GM12878 (cell line): ENCODE measurements at regions of chr17 and their contacts with region 1.

Region 1: DNA sequence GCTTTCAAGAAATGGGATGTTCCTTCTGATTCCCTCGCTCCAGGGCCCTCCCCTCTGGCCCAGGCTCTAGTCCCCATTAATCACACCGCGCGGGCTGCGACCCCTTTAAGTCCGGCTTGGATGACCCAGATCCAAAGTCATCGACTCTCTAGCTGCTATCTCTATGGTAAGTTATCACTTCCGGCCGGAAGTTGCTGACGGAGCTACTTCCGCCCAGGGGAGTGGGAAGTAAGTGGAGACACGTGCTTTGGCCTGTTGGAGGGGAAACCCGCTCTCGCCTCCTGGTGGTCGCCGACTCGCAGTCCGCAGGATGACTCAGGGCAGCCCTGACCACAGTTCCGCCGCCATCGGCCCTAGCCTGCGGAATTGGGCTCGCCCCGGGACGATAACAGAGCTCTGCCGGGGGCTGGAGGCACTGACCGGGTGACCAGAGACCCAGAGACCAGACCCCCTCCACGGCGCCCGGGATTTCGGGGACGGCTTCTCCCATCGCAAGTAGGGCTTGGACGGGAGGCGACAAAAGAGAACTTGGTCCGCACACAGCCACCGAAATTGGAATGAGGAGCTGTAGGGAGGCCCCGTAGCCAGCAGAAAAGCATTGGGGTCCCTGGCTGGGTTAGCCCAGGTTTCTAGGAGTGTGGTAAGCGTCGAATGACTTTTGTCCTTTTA is 52.2 kb upstream of the SEC14L1 start:
- DNase-seq: peak; percentile 87
- ATAC-seq: peak; percentile 93
- H3K4me3 ChIP-seq: peak overlapping the region; percentile 91
- H3K27ac ChIP-seq: peak overlapping the region; percentile 91
- H3K4me1 ChIP-seq: peaks cover 23% of the 10 kb centered on the region
- H3K27me3 ChIP-seq: no peaks in the 10 kb centered on the region
- CTCF ChIP-seq: peak; percentile 61 to 77 (median 66)
- EP300 ChIP-seq: peak; percentile 31 to 39; a peak in 1 of 4 replicates
- POLR2A ChIP-seq: peak; percentile 93
- RAD21 ChIP-seq: 0 out of 2 replicates have a peak, but pooled peaks have one; percentile 22

Region 2: DNA sequence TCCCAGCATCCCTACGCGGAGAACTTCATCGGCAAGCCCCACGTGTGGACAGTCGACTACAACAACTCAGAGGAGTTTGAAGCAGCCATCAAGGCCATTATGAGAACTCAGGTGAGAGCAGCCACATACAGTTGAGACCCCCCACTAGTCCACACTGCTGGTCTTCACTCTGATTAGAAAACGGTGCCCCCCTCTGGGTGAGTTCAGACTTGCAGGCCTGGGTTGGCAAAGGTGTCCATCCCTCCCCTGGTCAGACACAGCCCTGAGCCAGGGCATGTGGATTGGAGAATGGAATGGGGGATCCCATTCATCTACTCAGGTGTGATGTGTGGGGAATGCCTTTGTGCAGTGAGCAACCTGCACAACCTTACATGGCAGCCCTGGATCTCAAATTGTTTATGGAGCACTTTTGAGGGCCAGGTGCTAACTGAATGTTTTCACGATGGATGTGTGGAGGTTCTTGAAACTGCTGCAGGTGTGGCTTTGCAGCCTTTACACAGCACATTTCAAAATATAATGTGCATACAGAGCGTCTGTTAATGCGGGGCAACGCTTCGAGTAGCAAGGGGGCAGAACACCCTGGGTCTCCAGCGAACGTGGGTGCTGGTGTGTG is 147.7 kb before region 1 on chr17:
- CTCF ChIA-PET with region 1: no interaction called
- POLR2A ChIA-PET with region 1: no interaction called
- RAD21 ChIA-PET with region 1: no interaction called
- SMC1A ChIA-PET with region 1: no interaction called
- in situ Hi-C with region 1: no loop called
- intact Hi-C with region 1: no loop called
- DNase-seq: no peak
- ATAC-seq: no peak
- H3K4me3 ChIP-seq: no peak overlapping the region
- H3K27ac ChIP-seq: no peak overlapping the region
- H3K4me1 ChIP-seq: no peaks in the 10 kb centered on the region
- H3K27me3 ChIP-seq: no peaks in the 10 kb centered on the region; a peak in 1 of 4 replicates
- CTCF ChIP-seq: peak in 1 of 3 experiments; percentile 15; a peak in 2 of 6 replicates
- EP300 ChIP-seq: no peak
- POLR2A ChIP-seq: no peak
- RAD21 ChIP-seq: no peak

Region 3: DNA sequence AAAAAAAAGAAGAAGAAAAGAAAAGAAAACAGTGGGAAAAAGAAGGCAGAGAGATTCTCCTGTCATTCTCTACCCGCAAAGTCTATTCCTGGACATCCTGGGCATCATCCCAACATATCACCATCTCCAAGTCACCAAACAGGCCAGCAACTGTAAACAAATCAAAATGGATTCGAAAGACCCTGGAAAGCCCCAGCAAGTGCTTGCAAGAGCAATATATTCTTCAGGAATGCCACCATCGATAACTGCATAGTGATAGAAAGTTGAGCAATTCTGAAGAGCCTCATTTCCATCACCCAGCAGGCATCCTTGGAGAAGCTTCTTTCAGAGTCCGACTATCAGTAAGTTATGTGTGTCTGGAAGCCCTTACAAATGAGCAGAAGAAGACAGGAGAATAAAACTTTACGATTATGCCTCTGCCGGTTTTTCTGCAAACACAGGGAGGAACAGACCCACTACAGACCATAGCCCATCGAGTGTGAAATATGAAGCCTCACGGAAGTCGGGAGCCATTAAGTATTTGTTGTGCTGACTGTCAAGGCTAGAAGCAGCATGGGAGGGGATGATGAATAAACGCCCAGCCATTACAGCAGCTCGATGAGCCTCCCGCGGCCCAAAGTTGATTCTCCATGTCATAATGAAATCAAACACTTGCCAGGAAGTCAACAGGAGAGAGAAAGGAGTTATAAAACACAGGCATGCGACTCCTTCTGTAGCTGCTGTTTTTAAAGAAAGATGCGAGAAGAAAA is 12.3 kb before region 1 on chr17:
- CTCF ChIA-PET with region 1: interaction called, 29 read pairs
- POLR2A ChIA-PET with region 1: interaction called, 5 read pairs
- RAD21 ChIA-PET with region 1: no interaction called
- SMC1A ChIA-PET with region 1: interaction called, 3 read pairs
- in situ Hi-C with region 1: no loop called
- intact Hi-C with region 1: no loop called
- DNase-seq: no peak
- ATAC-seq: no peak
- H3K4me3 ChIP-seq: no peak overlapping the region
- H3K27ac ChIP-seq: no peak overlapping the region
- H3K4me1 ChIP-seq: no peaks in the 10 kb centered on the region
- H3K27me3 ChIP-seq: no peaks in the 10 kb centered on the region; a peak in 1 of 4 replicates
- CTCF ChIP-seq: no peak
- EP300 ChIP-seq: no peak
- POLR2A ChIP-seq: no peak
- RAD21 ChIP-seq: no peak

Region 4: GRCh38 chr17:77120868-77121267 is 32.3 kb after region 1 on chr17:
- CTCF ChIA-PET with region 1: no interaction called
- POLR2A ChIA-PET with region 1: no interaction called
- RAD21 ChIA-PET with region 1: no interaction called
- SMC1A ChIA-PET with region 1: no interaction called
- in situ Hi-C with region 1: no loop called
- intact Hi-C with region 1: no loop called
- DNase-seq: no peak
- ATAC-seq: no peak
- H3K4me3 ChIP-seq: no peak overlapping the region
- H3K27ac ChIP-seq: no peak overlapping the region
- H3K4me1 ChIP-seq: peaks cover 3% of the 10 kb centered on the region; the same call in 1 of the 2 replicates
- H3K27me3 ChIP-seq: no peaks in the 10 kb centered on the region
- CTCF ChIP-seq: no peak
- EP300 ChIP-seq: no peak
- POLR2A ChIP-seq: no peak
- RAD21 ChIP-seq: no peak

Region 5: DNA sequence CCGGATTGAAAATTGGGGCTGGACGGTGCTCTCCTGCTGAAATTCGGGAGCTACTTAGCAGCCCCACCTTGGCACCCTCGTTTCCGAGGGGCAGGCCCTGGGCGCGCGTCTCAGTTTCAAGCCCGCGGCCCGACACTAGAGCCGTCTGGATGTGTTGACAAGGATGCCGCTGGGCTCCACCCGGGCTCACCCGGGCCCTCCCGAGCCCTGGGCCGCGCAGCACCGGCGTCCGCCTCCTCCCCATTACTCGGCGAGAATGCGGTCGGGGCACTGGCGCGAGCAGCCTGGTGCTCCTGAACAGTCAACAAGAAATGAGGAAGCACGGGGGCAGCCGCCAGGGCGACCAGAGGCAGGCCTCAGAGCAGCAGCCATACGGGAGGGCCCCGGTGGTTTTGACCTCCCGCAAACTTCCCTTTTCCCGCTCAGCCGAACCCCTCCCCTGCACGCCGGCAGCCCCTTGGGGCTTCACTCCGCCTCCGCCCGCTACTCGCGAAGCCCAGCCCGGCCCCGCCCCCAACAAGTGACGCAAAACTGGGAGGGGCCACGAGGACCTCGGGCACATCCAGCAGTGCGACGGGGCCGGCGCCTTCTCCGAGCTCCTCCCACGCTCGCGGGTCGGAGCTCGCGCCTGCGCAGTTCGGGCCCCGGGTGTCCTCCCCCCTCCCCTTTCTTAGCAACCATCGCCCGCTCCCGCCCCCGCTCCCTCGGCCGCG is 51.7 kb after region 1 on chr17:
- CTCF ChIA-PET with region 1: interaction called, 14 read pairs
- POLR2A ChIA-PET with region 1: interaction called, 14 read pairs
- RAD21 ChIA-PET with region 1: interaction called, 9 read pairs
- SMC1A ChIA-PET with region 1: interaction called, 12 read pairs
- in situ Hi-C with region 1: no loop called
- intact Hi-C with region 1: loop called (anchors 2 kb)
- DNase-seq: peak; percentile 93
- ATAC-seq: peak; percentile 83
- H3K4me3 ChIP-seq: peak overlapping the region; percentile 34
- H3K27ac ChIP-seq: peak overlapping the region; percentile 84
- H3K4me1 ChIP-seq: peaks cover 17% of the 10 kb centered on the region
- H3K27me3 ChIP-seq: no peaks in the 10 kb centered on the region
- CTCF ChIP-seq: no peak
- EP300 ChIP-seq: peak; percentile 58 to 70; a peak in 2 of 4 replicates
- POLR2A ChIP-seq: peak; percentile 88
- RAD21 ChIP-seq: peak; percentile 12; the same call in 1 of the 2 replicates

Region 6: GRCh38 chr17:77214743-77215142 is 126.2 kb after region 1 on chr17:
- CTCF ChIA-PET with region 1: interaction called, 14 read pairs
- POLR2A ChIA-PET with region 1: interaction called, 9 read pairs
- RAD21 ChIA-PET with region 1: interaction called, 10 read pairs
- SMC1A ChIA-PET with region 1: interaction called, 12 read pairs
- in situ Hi-C with region 1: no loop called
- intact Hi-C with region 1: no loop called
- DNase-seq: no peak
- ATAC-seq: no peak
- H3K4me3 ChIP-seq: no peak overlapping the region
- H3K27ac ChIP-seq: no peak overlapping the region
- H3K4me1 ChIP-seq: peaks cover 36% of the 10 kb centered on the region
- H3K27me3 ChIP-seq: no peaks in the 10 kb centered on the region
- CTCF ChIP-seq: peak in 2 of 3 experiments; percentile 39 to 49; a peak in 5 of 6 replicates
- EP300 ChIP-seq: no peak
- POLR2A ChIP-seq: no peak
- RAD21 ChIP-seq: peak; percentile 17

Region 7: DNA sequence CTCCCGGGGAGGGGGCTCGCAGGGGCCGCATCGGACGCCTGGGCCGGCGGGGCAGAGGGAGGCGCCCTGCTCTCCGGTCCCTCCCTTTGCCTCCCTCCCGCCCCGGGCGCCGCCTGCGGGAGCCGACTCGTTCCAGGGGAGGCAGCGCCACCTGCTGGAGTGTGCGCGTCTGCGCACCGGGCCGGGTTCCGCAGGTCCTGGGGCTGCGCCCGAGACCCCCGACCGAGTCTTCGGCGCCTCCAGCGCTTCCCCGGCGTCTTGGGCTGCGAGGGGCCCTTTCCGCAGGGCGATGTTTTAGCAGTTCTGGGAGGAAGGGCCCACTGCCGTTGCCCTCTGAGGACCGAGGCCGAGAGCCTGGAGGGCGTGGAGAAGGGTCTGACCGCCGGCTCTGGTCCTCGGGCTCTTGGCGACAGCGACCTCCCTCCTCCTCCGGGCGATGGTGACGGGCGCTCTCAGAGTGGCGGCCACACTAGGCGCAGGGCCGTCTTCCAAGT is 158.5 kb after region 1 on chr17:
- CTCF ChIA-PET with region 1: interaction called, 33 read pairs
- POLR2A ChIA-PET with region 1: no interaction called
- RAD21 ChIA-PET with region 1: interaction called, 6 read pairs
- SMC1A ChIA-PET with region 1: interaction called, 14 read pairs
- in situ Hi-C with region 1: loop called (anchors 5 kb)
- intact Hi-C with region 1: loop called (anchors 1 kb)
- DNase-seq: no peak
- ATAC-seq: peak; percentile 88
- H3K4me3 ChIP-seq: peak overlapping the region; percentile 73
- H3K27ac ChIP-seq: peak overlapping the region; percentile 44
- H3K4me1 ChIP-seq: peaks cover 27% of the 10 kb centered on the region
- H3K27me3 ChIP-seq: no peaks in the 10 kb centered on the region; a peak in 2 of 4 replicates
- CTCF ChIP-seq: peak; percentile 80 to 89 (median 80)
- EP300 ChIP-seq: no peak
- POLR2A ChIP-seq: no peak
- RAD21 ChIP-seq: peak; percentile 84